ENCODE measurements at regions of chr3 and their contacts with region 1.

Region 1: GRCh38 chr3:160003520-160004128 is 15.0 kb downstream of the IL12A start:
- DNase-seq: peak; percentile 48
- ATAC-seq: peak; percentile 83 to 87

Region 2: GRCh38 chr3:159804726-159805410 is 198.8 kb before region 1 on chr3:
- intact Hi-C with region 1: no loop called
- DNase-seq: peak; percentile 67
- ATAC-seq: peak; percentile 91 to 96

Region 3: GRCh38 chr3:159828542-159828943 is 175.1 kb before region 1 on chr3:
- intact Hi-C with region 1: loop called (anchors 2 to 5 kb)
- DNase-seq: no peak
- ATAC-seq: peak; percentile 45 to 80

Region 4: GRCh38 chr3:159884661-159885402 is 118.8 kb before region 1 on chr3:
- intact Hi-C with region 1: loop called (anchors 2 to 10 kb)
- DNase-seq: no peak
- ATAC-seq: no peak

Region 5: DNA sequence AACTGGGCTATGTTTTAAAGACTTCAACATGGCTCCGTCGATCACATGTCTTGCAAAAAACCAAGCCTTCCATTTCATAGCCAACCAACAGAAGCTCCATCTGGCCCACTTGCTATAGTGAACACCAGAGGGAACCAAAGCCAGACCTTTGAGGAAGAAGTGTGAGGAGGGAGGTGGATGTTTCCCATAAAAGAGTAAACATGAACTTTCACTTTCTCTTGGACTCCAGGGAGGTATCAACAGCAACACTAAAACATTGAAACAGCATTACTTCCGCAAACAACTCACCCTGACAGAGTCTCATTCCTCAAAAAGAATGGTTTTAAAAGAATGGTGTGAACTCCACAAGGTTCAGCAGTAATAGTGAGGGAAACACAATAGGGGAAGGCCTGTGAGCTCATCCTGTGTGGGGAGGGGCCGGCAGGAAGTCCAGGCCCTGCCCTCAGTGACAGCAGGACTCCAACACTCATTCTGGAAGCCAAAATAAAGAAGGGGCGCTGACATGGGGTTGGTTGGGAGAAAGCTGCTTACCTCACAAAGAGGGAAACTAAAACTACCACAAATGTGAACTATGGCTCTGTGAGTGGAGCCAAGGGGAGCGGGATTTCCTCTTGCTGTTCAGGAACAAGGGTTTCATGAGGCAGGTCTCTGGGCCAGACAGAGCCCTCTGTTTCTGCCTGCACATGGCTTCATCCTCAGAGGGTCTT is 74.0 kb before region 1 on chr3:
- intact Hi-C with region 1: loop called in 1 of 2 experiments (anchors 10 kb)
- DNase-seq: peak; percentile 52
- ATAC-seq: peak; percentile 53 to 88